Colonic mucosa (tissue), 4 donors: ENCODE measurements at regions of chr21 and their contacts with region 1.

Region 1: DNA sequence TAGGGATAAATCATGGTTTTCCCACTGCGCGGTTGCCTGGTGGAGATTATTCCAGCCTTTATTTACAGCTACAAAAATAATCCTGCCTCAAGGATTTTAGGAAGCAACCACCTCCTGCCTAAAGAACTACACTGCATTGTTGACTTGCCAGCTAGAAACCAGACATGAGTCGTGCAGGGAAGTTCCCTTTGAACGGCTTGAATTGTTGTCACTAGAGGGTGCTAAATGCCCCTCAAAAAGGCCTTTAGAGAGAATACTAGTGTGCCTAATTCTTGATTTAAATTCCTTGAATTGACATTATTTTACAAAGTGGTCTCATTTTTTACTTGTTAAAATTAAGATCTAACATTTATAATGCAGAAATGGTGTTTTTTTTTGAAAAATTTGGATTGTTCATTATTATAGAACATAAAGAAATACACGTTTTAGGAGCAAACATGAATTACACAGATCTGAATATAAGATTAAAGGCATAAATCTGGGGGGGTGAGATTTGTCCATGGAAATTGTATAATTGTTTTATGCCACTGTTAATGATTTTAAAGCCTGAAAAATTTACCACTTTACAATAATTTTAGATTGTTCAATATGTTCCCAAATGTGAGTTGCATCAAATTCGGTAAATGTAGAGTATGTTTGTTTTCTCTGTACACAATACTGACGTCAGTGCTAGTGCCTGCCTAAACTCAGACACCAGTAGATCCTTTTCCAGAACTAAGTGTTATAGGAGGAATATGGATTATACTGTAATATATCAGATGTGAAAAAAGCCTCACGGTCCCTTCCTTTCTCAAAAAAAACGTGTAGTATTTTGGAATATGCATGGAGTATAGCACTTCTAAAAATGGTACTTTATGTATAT is 7.6 kb upstream of the ERG start:
- DNase-seq: peak; percentile 71
- H3K4me3 ChIP-seq: no peak overlapping the region
- H3K27ac ChIP-seq: peak overlapping the region; percentile 24
- H3K4me1 ChIP-seq: peaks cover 4% of the 10 kb centered on the region
- H3K27me3 ChIP-seq: no peaks in the 10 kb centered on the region
- CTCF ChIP-seq: peak; percentile 49

Region 2: DNA sequence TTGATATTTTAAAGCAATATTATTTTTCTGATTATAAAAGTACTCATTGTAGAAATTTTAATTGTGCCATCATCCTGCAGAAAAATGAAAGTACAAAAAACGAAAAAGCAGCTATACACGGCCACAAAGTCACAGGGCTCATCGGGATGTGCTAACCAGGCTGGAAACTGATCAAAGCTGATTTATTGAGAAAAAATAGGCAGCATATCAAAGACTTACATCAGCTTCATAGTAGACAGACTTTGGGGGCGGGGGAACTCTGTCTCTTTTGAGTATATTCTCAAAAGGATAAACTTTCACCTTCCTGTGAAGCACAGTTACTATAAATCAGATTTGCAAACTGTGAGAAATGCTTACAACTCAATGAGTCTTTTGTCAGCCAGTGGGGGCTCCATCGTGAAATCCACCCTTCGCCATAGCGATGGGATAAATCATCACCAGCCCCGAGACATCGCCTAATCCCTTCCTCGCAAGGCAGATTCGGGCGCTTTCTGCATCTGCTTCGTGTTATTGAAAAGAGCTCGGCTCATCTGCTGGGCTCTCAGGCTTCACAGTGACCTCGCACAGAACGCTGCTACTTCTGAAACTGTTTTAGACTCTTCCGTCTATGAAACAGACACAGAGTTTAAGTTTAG is 61.6 kb after region 1 on chr21:
- intact Hi-C with region 1: no loop called
- DNase-seq: no peak
- H3K4me3 ChIP-seq: no peak overlapping the region
- H3K27ac ChIP-seq: no peak overlapping the region
- H3K4me1 ChIP-seq: no peaks in the 10 kb centered on the region
- H3K27me3 ChIP-seq: no peaks in the 10 kb centered on the region
- CTCF ChIP-seq: no peak

Region 3: GRCh38 chr21:38712071-38712470 is 206.2 kb after region 1 on chr21:
- intact Hi-C with region 1: loop called (anchors 5 kb)
- DNase-seq: peak; percentile 56
- H3K4me3 ChIP-seq: no peak overlapping the region
- H3K27ac ChIP-seq: no peak overlapping the region
- H3K4me1 ChIP-seq: no peaks in the 10 kb centered on the region
- H3K27me3 ChIP-seq: no peaks in the 10 kb centered on the region
- CTCF ChIP-seq: peak; percentile 33

Region 4: GRCh38 chr21:39137248-39138178 is 631.6 kb after region 1 on chr21:
- intact Hi-C with region 1: loop called (anchors 5 kb)
- DNase-seq: no peak
- H3K4me3 ChIP-seq: no peak overlapping the region
- H3K27ac ChIP-seq: no peak overlapping the region
- H3K4me1 ChIP-seq: no peaks in the 10 kb centered on the region
- H3K27me3 ChIP-seq: no peaks in the 10 kb centered on the region
- CTCF ChIP-seq: no peak